ENCODE measurements at regions of chr6 and their contacts with region 1.

Region 1: DNA sequence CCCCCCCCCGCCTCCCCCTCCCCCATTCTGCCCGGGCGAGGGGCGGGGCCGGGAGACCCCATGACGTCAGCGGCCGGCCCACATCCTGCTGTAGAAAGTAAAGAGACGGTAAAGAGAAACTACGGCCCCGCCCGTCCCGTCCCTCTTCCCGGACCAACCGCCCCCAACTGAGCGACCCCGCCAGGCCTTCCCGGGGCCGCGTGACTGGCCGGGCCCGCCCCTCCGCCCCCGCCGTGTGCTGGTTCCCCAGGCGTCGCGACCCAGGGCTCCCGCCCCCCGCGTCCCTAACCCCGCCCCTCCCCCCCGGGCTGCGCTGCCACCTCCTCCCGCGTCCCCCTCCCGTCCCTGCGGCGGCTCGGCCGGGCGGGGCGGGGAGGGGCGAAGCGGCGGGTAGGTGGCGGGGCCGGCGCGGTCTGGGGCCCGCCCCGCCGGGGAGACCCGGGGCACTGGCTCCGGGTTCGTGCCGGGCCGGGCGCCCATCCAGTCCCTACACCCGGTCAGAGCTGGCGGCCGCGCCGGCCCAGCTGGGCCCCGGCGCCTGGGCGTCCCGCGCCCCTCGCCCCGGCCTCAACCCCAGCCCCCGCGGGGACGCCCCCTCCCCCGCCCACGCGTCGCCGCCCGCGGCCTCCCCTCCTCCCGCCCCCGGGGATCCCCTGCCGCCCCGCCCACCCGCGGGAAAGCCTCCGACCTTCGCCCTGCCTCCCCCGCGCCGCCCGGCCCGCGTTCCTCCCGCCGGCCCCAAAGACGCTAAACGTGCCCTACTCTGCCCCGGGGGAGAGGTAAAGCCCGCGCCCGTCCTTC is 636 bp upstream of the HIVEP1 start:
- DNase-seq: peak; percentile 98 to 99 (median 99)
- ATAC-seq: peak; percentile 74 to 85 (median 78)
- H3K4me3 ChIP-seq: peak overlapping the region; percentile 47 to 74 (median 70)
- H3K27ac ChIP-seq: peak overlapping the region; percentile 94 to 100 (median 96)
- H3K4me1 ChIP-seq: peaks cover 0 to 35% (median 0%) of the 10 kb centered on the region in 4 donors
- H3K27me3 ChIP-seq: no peaks in the 10 kb centered on the region
- CTCF ChIP-seq: no peak
- POLR2A ChIP-seq: no peak

Region 2: GRCh38 chr6:11869672-11870340 is 141.7 kb before region 1 on chr6:
- intact Hi-C with region 1: loop called in 1 of 2 experiments (anchors 10 kb)
- DNase-seq: peak; percentile 75 to 85 (median 84)
- ATAC-seq: peak; percentile 67 to 77 (median 70)
- H3K4me3 ChIP-seq: no peak overlapping the region
- H3K27ac ChIP-seq: peak overlapping the region; percentile 40 to 95 (median 88)
- H3K4me1 ChIP-seq: peaks cover 0 to 23% (median 11%) of the 10 kb centered on the region in 4 donors
- H3K27me3 ChIP-seq: no peaks in the 10 kb centered on the region
- CTCF ChIP-seq: no peak
- POLR2A ChIP-seq: no peak

Measured in right lobe of liver (tissue), 6 donors.